ENCODE measurements at regions of chr12 and their contacts with region 1.

Region 1: DNA sequence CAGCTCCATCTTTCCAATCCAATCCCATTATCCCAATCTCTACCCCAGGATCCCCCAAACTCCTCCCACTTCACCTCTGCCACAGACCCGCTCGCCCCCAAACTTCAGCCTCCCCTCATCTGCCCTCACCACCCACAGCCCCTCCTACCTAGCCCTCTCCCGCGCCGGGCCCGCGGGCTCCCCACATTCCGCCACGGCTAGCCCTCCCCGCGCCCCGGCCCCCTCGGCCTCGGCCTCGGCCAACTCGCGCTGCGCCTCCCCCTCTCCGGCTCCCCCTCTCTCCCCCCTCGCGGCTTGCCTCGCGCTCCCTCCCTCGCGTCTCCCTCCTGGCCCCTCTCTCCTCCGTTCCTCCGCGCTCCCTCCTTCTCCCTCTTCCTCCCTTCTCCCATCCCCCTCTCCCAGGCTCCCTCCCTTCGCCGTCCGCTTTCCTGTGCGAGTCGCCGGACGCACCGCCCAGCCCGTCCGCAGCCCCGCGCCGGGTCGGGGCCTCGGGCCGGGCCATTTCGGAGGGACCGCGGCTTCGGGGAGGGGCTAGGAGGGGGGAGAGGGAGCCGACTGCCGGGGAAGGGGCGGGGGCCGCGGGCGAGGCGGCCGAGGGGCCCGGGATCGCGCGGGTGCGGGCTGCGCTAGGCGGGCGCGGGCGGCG is at the start of gene ATN1:
- DNase-seq: peak in 1 of 2 donors; percentile 91
- H3K4me3 ChIP-seq: peak within 1 kb of the TSS; percentile 92 to 99
- H3K27ac ChIP-seq: peak within 1 kb of the TSS; percentile 97 to 99
- H3K4me1 ChIP-seq: peaks cover 27 to 40% of the 10 kb centered on the region in 2 donors
- H3K27me3 ChIP-seq: no peaks in the 10 kb centered on the region
- CTCF ChIP-seq: no peak
- total RNA-seq, gene ATN1: 207 TPM

Region 2: DNA sequence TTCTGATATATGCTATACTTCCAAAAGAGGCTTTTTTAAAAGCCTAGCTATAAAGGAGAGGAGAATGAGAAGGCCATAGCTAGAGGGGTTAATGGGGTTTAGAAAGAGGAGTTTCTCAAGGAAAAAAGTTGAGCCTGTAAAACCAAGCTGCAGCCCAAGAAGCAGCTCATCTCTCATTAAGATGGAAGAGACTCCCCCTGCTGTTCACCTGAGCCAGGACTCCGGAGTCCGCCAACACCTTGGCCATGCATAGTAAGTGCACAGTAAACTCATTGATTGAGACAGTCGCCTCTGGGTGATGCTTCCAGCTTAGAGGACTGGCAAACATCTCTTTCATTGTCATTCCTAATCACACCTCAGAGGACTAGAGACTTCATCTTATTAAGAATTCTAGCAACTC is 1028.6 kb before region 1 on chr12:
- intact Hi-C with region 1: no loop called
- DNase-seq: no peak
- H3K4me3 ChIP-seq: no peak overlapping the region
- H3K27ac ChIP-seq: no peak overlapping the region
- H3K4me1 ChIP-seq: no peaks in the 10 kb centered on the region
- H3K27me3 ChIP-seq: no peaks in the 10 kb centered on the region
- CTCF ChIP-seq: no peak

Region 3: GRCh38 chr12:6341417-6342139 is 585.9 kb before region 1 on chr12 and contains the start of gene TNFRSF1A:
- intact Hi-C with region 1: loop called (anchors 10 kb)
- DNase-seq: peak in 1 of 2 donors; percentile 90
- H3K4me3 ChIP-seq: peak within 1 kb of the TSS; percentile 90 to 93
- H3K27ac ChIP-seq: peak within 1 kb of the TSS; percentile 97 to 98
- H3K4me1 ChIP-seq: peaks cover 16 to 55% of the 10 kb centered on the region in 2 donors
- H3K27me3 ChIP-seq: no peaks in the 10 kb centered on the region
- CTCF ChIP-seq: no peak
- total RNA-seq, gene TNFRSF1A: 528 TPM

Region 4: GRCh38 chr12:6867413-6868210 is 59.9 kb before region 1 on chr12 and contains the start of gene TPI1:
- intact Hi-C with region 1: loop called (anchors 2 kb)
- DNase-seq: no peak
- H3K4me3 ChIP-seq: peak within 1 kb of the TSS; percentile 91 to 94
- H3K27ac ChIP-seq: peak within 1 kb of the TSS; percentile 99
- H3K4me1 ChIP-seq: peaks cover 14 to 40% of the 10 kb centered on the region in 2 donors
- H3K27me3 ChIP-seq: no peaks in the 10 kb centered on the region
- CTCF ChIP-seq: peak in 2 of 3 experiments; percentile 3 to 11
- total RNA-seq, gene TPI1: 482 TPM

Region 5: DNA sequence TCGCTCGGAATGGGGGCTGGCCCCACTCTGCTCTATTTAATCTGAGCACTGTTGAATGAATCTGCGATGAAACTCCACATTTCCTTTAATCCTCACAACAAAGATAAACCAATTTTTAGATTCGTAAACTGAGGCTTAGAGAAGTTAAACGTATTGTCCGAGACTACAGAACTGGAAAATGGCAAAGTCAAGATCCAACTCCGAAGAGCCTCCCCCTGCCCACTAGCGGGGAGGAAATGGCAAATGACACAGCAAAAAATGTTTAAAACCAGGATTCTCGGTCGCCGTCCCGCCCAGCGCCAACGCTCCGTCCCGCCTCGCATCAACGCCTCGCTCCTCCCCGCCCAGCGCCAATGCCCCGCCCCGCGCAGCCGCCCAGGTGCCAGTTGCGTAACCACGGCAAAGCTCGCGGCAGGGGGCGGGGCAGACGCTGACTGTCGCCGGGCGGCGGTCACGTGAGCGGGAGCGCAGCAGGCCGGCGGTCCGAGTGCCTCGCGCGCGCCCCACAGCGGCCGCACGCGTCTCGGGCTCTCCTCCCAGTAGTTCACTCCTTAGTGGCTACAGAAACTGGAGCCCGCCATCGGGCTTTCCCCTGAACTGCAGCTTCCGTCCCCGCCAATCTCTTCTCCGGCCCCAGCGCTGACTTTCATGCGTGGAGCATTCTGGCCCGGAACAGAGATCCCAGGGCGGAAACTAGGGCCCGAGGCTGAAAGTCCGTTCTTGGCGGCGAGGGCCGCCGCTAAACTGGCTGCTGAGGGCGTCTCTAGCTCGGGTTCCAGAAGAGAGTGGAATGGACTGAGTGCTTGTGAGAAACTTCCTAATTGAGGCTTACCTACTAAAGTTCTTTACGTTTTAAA is 36.5 kb before region 1 on chr12:
- intact Hi-C with region 1: loop called (anchors 2 kb)
- DNase-seq: peak; percentile 88 to 98
- H3K4me3 ChIP-seq: peak overlapping the region; percentile 54 to 72
- H3K27ac ChIP-seq: peak overlapping the region; percentile 92 to 93
- H3K4me1 ChIP-seq: peaks cover 0 to 6% of the 10 kb centered on the region in 2 donors
- H3K27me3 ChIP-seq: no peaks in the 10 kb centered on the region
- CTCF ChIP-seq: peak; percentile 82 to 94 (median 83)

Region 6: GRCh38 chr12:6937481-6938297 is 10.2 kb after region 1 on chr12:
- intact Hi-C with region 1: loop called (anchors 1 kb)
- DNase-seq: peak; percentile 72 to 96
- H3K4me3 ChIP-seq: peak overlapping the region; percentile 64 to 67
- H3K27ac ChIP-seq: peak overlapping the region; percentile 85 to 93
- H3K4me1 ChIP-seq: peaks cover 15 to 32% of the 10 kb centered on the region in 2 donors
- H3K27me3 ChIP-seq: no peaks in the 10 kb centered on the region
- CTCF ChIP-seq: peak; percentile 95 to 97 (median 95)

Region 7: DNA sequence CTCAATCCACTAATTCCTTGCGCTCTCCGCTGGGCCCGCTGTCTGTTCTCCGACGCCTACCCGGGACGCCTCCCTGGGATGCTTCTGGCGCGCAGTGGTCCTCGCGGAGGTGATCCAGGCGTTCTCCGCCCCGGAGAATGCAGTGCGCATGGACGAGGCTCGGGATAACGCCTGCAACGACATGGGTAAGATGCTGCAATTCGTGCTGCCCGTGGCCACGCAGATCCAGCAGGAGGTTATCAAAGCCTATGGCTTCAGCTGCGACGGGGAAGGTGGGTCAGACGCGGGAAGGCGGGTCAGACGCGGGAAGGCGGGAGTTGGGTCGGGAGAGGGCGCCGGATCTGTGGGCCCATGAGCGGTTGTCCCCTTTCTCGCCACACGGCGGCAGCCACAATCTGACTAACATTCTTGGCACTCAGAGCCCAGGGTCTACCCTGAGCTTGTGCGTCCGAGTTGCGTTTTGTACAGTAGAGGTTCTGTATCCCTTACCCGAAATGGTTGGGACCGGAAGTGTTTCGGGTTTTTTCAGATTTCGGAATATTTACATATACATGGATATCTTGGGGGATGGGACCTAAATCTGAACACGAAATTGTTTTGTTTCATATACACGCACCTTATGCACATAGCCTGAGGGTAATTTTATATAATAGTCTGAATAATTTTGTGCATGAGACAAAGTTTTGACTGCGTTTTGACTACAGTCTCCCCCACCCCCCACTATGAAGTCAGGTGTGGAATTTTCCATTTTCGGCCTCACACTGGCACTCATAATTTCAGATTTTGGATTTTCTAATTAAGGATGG is 17.1 kb after region 1 on chr12:
- intact Hi-C with region 1: loop called (anchors 1 kb)
- DNase-seq: peak; percentile 86 to 97
- H3K4me3 ChIP-seq: peak overlapping the region; percentile 80 to 91
- H3K27ac ChIP-seq: peak overlapping the region; percentile 96 to 99
- H3K4me1 ChIP-seq: peaks cover 0 to 21% of the 10 kb centered on the region in 2 donors
- H3K27me3 ChIP-seq: no peaks in the 10 kb centered on the region
- CTCF ChIP-seq: peak; percentile 77 to 95 (median 81)

Region 8: DNA sequence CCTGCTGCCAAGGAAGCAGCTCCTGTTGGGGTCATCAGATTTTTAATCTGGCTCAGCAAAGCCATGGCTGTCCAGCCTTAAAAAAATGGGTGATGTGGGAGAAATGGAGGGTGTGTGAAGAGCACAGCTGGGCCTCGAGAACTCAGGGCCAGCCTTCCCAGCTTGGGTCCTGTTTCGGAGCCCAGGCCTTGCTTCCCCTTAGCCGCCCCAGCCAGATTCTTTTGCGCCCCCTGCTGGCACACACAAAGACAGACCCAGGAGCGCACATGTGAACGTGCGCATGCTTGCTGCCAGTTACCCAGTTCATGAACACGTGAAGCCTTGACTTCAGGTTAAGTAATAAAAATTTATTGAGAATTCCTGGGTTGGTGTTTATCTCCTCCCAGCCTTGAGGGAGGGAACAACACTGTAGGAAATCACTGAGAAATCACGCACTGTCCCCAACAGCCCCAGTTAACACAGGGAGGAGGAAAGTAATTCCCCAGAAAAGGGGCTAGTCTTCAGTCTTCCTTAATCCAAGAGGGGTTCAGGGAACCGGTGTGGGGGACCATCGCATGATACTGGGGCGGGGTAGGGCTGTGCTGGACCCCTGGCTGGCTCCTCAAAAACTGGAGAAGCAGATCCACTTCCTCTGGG is 37.6 kb after region 1 on chr12:
- intact Hi-C with region 1: loop called (anchors 1 kb)
- DNase-seq: peak in 1 of 2 donors; percentile 90
- H3K4me3 ChIP-seq: no peak overlapping the region
- H3K27ac ChIP-seq: peak overlapping the region; percentile 64 to 75
- H3K4me1 ChIP-seq: peaks cover 0 to 28% of the 10 kb centered on the region in 2 donors
- H3K27me3 ChIP-seq: no peaks in the 10 kb centered on the region
- CTCF ChIP-seq: peak; percentile 82 to 88 (median 84)

Region 9: DNA sequence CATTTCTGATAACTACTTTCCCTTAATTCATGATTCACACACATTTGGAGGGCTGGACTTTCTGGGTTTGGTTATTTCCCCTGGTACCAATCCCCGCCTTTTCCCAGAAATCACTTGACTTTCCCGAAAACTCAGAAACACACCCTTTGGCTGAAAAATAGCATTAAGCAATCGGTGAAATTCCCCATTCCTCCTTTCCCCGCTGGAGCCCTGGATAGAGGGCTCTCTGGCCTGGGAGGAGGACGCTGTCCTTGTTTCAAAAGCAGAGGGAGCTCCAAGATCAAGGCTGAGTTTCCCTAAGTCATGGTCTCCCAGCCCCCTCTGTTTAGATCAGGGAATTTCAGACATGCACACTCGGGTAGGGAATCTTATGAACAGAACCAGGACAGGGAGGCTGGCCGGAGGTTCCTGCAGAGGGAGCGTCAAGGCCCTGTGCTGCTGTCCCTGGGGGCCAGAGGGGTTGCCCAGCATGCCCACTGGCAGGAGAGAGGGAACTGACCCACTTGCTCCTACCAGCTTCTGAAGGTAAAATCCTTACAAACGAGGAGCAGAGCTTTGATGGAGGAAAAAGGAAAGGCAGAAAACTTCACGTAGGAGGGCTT is 133.0 kb after region 1 on chr12 and contains the start of gene C1S:
- intact Hi-C with region 1: no loop called
- DNase-seq: peak; percentile 57 to 93
- H3K4me3 ChIP-seq: peak within 1 kb of the TSS; percentile 34 to 55
- H3K27ac ChIP-seq: peak within 1 kb of the TSS; percentile 80 to 82
- H3K4me1 ChIP-seq: peaks cover 0 to 17% of the 10 kb centered on the region in 2 donors
- H3K27me3 ChIP-seq: no peaks in the 10 kb centered on the region
- CTCF ChIP-seq: peak; percentile 81 to 92 (median 88)
- total RNA-seq, gene C1S: 273 TPM